Sigmoid colon (tissue), 7 donors: ENCODE measurements at regions of chr15 and their contacts with region 1.

Region 1: GRCh38 chr15:25438601-25439368 is at the start of gene UBE3A:
- DNase-seq: peak; percentile 95
- H3K4me3 ChIP-seq: peak within 1 kb of the TSS; percentile 85 to 100 (median 98)
- H3K27ac ChIP-seq: peak within 1 kb of the TSS; percentile 96 to 99 (median 98)
- H3K4me1 ChIP-seq: peaks cover 0 to 46% (median 28%) of the 10 kb centered on the region in 4 donors
- H3K27me3 ChIP-seq: no peaks in the 10 kb centered on the region
- CTCF ChIP-seq: no peak
- EP300 ChIP-seq: peak in 1 of 4 donors; percentile 21
- POLR2A ChIP-seq: peak; percentile 13 to 27
- total RNA-seq, gene UBE3A: 70.9 to 103 (median 86.1) TPM

Region 2: DNA sequence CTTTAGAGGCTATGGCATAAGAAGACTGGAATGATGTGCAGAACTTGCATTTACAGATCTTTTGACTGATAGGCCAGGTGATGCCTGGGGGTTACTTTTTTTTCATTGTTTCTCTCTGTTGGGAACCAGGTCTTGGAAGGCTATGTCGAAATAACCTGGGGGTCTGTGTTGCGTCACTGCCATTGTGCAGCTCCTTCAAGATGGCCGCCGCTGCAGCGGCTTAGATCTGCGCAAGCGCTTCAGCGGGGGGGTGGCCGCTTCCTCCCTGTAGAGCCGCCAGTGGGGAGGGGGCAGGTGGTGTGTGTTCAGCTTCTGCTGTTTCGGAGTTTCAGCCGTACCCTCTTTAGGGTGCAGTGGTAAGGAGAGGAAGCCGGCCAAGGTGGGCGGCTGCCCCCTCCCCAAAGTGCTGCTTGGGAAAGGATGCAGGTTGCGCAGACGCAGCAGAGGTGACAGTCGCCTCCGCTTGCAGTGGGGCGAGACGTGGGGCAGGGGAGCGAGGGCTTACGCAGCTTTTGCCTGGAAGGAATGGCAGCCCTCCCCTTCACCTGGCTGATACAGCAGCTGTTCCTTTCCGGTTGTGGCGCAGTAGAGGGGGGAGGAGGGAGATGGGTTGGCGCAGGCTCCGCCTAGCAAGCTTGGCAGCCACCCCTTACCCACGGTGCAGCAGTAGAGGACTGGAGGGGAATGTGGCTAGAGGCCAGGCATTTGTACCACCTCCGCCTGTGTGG is 482.5 kb before region 1 on chr15:
- intact Hi-C with region 1: loop called (anchors 5 kb)
- DNase-seq: peak; percentile 90
- H3K4me3 ChIP-seq: peak overlapping the region; percentile 55 to 74 (median 69)
- H3K27ac ChIP-seq: peak overlapping the region; percentile 90 to 94 (median 91)
- H3K4me1 ChIP-seq: peaks cover 0 to 5% (median 0%) of the 10 kb centered on the region in 4 donors
- H3K27me3 ChIP-seq: no peaks in the 10 kb centered on the region
- CTCF ChIP-seq: no peak
- EP300 ChIP-seq: no peak
- POLR2A ChIP-seq: no peak

Region 3: GRCh38 chr15:25345943-25346342 is 92.8 kb before region 1 on chr15:
- intact Hi-C with region 1: loop called (anchors 5 kb)
- DNase-seq: peak; percentile 78
- H3K4me3 ChIP-seq: no peak overlapping the region
- H3K27ac ChIP-seq: peak overlapping the region; percentile 45 to 73 (median 56)
- H3K4me1 ChIP-seq: peaks cover 0 to 15% (median 8%) of the 10 kb centered on the region in 4 donors
- H3K27me3 ChIP-seq: no peaks in the 10 kb centered on the region
- CTCF ChIP-seq: peak in 3 of 4 experiments; percentile 13 to 37 (median 36)
- EP300 ChIP-seq: no peak
- POLR2A ChIP-seq: no peak

Region 4: DNA sequence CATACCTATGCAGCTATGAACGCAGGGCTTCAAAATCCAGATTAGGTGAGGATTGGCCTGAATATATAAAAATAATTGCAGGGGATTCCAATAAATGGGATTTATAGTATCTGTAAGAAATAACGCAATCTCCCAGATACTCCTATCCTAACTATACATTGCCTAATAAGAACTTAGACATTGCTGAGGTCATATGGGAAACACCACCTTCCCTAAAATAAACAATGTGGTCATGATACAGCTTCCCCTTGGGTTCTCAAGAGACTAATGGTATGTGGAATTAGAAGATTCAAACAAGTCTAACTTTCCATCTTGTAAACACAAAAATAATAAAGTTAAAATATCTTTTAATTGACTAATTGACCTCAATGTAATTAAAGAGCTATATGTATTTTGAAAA is 28.1 kb before region 1 on chr15:
- intact Hi-C with region 1: no loop called
- DNase-seq: no peak
- H3K4me3 ChIP-seq: no peak overlapping the region
- H3K27ac ChIP-seq: no peak overlapping the region
- H3K4me1 ChIP-seq: peaks cover 0 to 67% (median 48%) of the 10 kb centered on the region in 4 donors
- H3K27me3 ChIP-seq: no peaks in the 10 kb centered on the region
- CTCF ChIP-seq: no peak
- EP300 ChIP-seq: no peak
- POLR2A ChIP-seq: no peak

Region 5: GRCh38 chr15:25670025-25670554 is 231.3 kb after region 1 on chr15:
- intact Hi-C with region 1: loop called (anchors 5 kb)
- DNase-seq: peak; percentile 89
- H3K4me3 ChIP-seq: peak overlapping the region in 3 of 4 donors; percentile 21 to 34 (median 23)
- H3K27ac ChIP-seq: peak overlapping the region; percentile 68 to 92 (median 82)
- H3K4me1 ChIP-seq: peaks cover 0 to 43% (median 33%) of the 10 kb centered on the region in 4 donors
- H3K27me3 ChIP-seq: no peaks in the 10 kb centered on the region
- CTCF ChIP-seq: peak in 1 of 4 experiments; percentile 9
- EP300 ChIP-seq: peak in 1 of 4 donors; percentile 84
- POLR2A ChIP-seq: no peak

Region 6: DNA sequence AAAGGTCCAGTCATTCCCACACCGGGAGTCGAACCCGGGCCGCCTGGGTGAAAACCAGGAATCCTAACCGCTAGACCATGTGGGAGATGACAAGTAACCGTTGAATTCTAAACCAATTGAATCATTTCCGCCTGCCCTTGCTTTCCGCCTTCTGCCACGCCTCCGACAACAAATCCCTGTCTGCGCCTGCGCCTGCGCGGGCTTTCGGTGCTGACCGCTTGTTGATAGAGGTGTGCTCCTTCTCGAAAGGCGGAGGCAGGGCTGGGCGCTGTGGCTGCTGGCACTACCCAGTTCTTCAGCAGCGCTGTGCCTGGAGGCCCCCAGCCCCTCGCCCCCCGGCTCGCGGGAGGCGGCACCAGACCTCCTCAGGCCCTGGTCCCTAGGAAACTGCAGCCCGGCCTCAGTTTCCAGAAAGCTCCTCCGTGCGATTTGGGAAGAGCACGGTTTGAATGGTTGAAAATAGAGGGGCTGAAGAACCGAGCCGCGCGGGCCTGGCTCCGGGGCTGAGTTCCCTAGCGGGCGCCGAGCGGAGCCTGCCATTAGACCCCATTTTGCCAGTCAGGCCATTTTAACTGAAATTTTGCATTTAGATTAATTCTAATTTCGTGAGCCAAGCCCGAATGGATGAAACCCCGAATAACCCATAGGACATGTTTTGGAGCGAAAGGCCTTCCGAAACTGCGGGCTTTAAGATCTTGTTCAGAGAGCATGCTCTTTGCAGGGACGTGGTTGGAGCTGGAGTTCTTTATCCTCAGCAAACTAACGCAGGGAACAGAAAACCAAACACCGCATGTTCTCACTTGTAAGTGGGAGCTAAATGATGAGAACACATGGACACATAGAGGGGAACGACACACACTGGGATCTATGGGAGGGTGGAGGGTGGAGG is 643.7 kb after region 1 on chr15:
- intact Hi-C with region 1: loop called (anchors 5 kb)
- DNase-seq: peak; percentile 98
- H3K4me3 ChIP-seq: peak overlapping the region; percentile 62 to 86 (median 78)
- H3K27ac ChIP-seq: peak overlapping the region; percentile 84 to 95 (median 94)
- H3K4me1 ChIP-seq: peaks cover 0 to 16% (median 7%) of the 10 kb centered on the region in 4 donors
- H3K27me3 ChIP-seq: no peaks in the 10 kb centered on the region
- CTCF ChIP-seq: no peak
- EP300 ChIP-seq: no peak
- POLR2A ChIP-seq: peak; percentile 45 to 48